HCT116 (cell line): ENCODE measurements at regions of chr2 and their contacts with region 1.

Region 1: DNA sequence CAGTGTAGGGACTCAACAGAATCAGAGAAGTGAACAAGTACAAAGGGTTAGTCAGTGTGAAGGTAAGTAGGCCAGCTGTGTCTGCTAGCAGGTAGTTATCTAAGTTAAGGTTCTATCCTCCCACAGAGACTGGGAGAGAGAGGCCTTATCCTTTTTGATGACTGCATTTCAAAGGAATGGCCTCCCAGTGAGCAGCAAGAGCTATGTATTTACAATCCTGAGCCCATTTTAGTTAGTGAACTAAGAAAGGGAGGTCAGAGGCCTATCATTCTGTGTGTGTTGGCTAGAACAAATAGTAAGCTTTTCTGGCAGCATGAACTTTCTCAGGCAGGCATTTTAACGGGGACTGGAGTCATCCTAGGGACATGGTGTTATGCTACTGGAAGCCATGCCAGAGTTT is 182.9 kb downstream of the VWC2L start:
- DNase-seq: peak; percentile 27
- ATAC-seq: peak; percentile 76
- H3K4me3 ChIP-seq: no peak overlapping the region
- H3K27ac ChIP-seq: no peak overlapping the region
- H3K4me1 ChIP-seq: peaks cover 5 to 8% of the 10 kb centered on the region in 2 experiments; a peak in 3 of 4 replicates
- H3K27me3 ChIP-seq: no peaks in the 10 kb centered on the region
- CTCF ChIP-seq: no peak
- POLR2A ChIP-seq: no peak
- RAD21 ChIP-seq: no peak

Region 2: DNA sequence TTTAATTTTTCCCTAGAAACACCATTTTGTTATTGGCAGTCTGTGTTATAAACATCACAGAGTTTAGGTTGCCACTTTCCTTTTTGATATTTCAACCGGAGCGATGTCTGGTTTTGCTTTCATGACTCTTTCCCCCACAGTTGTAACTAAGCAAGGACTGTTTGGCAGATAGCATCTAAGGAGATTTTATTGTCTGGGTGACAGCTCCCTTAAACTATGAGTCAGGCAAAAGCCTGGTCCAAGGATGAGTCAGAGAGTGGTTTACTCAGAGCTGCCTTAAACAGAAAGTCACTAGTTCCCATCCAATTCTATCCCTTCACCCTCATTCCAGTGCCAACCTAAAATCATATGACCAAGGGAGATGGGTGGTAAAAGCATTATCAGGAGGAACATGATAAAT is 524.5 kb before region 1 on chr2:
- CTCF ChIA-PET with region 1: no interaction called
- POLR2A ChIA-PET with region 1: no interaction called
- RAD21 ChIA-PET with region 1: no interaction called
- intact Hi-C with region 1: loop called (anchors 10 kb)
- DNase-seq: peak; percentile 83
- ATAC-seq: peak; percentile 99
- H3K4me3 ChIP-seq: peak overlapping the region in 1 of 2 experiments; percentile 7; a peak in 1 of 4 replicates
- H3K27ac ChIP-seq: no peak overlapping the region
- H3K4me1 ChIP-seq: peaks cover 3 to 15% of the 10 kb centered on the region in 2 experiments; a peak in 2 of 4 replicates
- H3K27me3 ChIP-seq: no peaks in the 10 kb centered on the region
- CTCF ChIP-seq: no peak
- POLR2A ChIP-seq: no peak
- RAD21 ChIP-seq: 0 out of 2 replicates have a peak, but pooled peaks have one; percentile 20

Region 3: DNA sequence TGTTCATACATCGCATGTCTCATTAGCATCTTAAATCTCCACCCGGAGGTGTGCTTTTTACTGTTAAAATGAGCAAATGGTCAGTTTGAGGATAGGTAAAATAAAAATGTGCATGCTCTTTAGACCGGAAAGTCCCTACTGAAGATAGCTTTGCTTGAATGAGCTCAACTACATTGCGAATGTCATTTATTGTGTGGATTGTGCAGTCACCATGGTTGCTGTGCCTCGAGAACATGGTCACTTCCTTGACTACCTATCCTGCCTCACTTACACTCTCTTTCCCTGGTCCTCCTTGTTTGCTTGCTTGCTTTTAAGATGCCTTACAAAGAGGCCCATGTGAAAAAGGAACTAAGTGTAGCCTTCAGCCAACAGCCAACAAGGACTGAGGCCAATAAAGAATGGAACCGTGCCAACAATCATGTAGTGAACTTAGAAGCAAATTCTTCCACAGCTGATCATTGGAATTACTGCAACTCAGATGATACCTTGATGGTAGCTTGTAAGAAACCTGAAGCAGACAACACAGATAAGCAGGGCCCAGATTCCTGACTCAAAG is 288.0 kb after region 1 on chr2:
- CTCF ChIA-PET with region 1: no interaction called
- POLR2A ChIA-PET with region 1: no interaction called
- RAD21 ChIA-PET with region 1: no interaction called
- intact Hi-C with region 1: no loop called
- DNase-seq: no peak
- ATAC-seq: no peak
- H3K4me3 ChIP-seq: no peak overlapping the region
- H3K27ac ChIP-seq: no peak overlapping the region
- H3K4me1 ChIP-seq: no peaks in the 10 kb centered on the region
- H3K27me3 ChIP-seq: no peaks in the 10 kb centered on the region
- CTCF ChIP-seq: no peak
- POLR2A ChIP-seq: no peak
- RAD21 ChIP-seq: no peak